BJ (cell line): ENCODE measurements at regions of chr15 and their contacts with region 1.

Region 1: GRCh38 chr15:41774062-41774881 is at the start of gene MAPKBP1:
- DNase-seq: peak; percentile 91
- H3K4me3 ChIP-seq: peak within 1 kb of the TSS; percentile 85
- H3K27me3 ChIP-seq: no peaks in the 10 kb centered on the region
- CTCF ChIP-seq: peak; percentile 89
- polyA plus RNA-seq, gene MAPKBP1: 4.8 and 8.3 TPM in 2 replicates

Region 2: GRCh38 chr15:41465822-41466421 is 308.4 kb before region 1 on chr15:
- CTCF ChIA-PET with region 1: interaction called, 14 read pairs
- POLR2A ChIA-PET with region 1: no interaction called
- DNase-seq: no peak
- H3K4me3 ChIP-seq: no peak overlapping the region
- H3K27me3 ChIP-seq: no peaks in the 10 kb centered on the region
- CTCF ChIP-seq: peak; percentile 96

Region 3: GRCh38 chr15:41790756-41791546 is 16.7 kb after region 1 on chr15:
- CTCF ChIA-PET with region 1: interaction called, 97 read pairs
- POLR2A ChIA-PET with region 1: interaction called, 3 read pairs
- DNase-seq: peak; percentile 57
- H3K4me3 ChIP-seq: no peak overlapping the region
- H3K27me3 ChIP-seq: no peaks in the 10 kb centered on the region
- CTCF ChIP-seq: no peak

Region 4: GRCh38 chr15:41811432-41812195 is 37.3 kb after region 1 on chr15:
- CTCF ChIA-PET with region 1: interaction called, 330 read pairs
- POLR2A ChIA-PET with region 1: no interaction called
- DNase-seq: no peak
- H3K4me3 ChIP-seq: no peak overlapping the region
- H3K27me3 ChIP-seq: no peaks in the 10 kb centered on the region
- CTCF ChIP-seq: peak; percentile 95

Region 5: GRCh38 chr15:41904541-41905005 is 130.3 kb after region 1 on chr15:
- CTCF ChIA-PET with region 1: interaction called, 25 read pairs
- POLR2A ChIA-PET with region 1: no interaction called
- DNase-seq: no peak
- H3K4me3 ChIP-seq: no peak overlapping the region
- H3K27me3 ChIP-seq: no peaks in the 10 kb centered on the region
- CTCF ChIP-seq: peak; percentile 92